AG04450 (cell line): ENCODE measurements at regions of chr4 and their contacts with region 1.

Region 1: GRCh38 chr4:39469429-39470077 is 10.7 kb downstream of the LIAS start:
- DNase-seq: peak; percentile 55
- H3K4me3 ChIP-seq: no peak overlapping the region
- H3K27ac ChIP-seq: no peak overlapping the region
- H3K27me3 ChIP-seq: no peaks in the 10 kb centered on the region
- CTCF ChIP-seq: peak; percentile 87

Region 2: GRCh38 chr4:39480251-39480650 is 10.7 kb after region 1 on chr4:
- CTCF ChIA-PET with region 1: interaction called, 15 read pairs
- POLR2A ChIA-PET with region 1: no interaction called
- DNase-seq: no peak
- H3K4me3 ChIP-seq: no peak overlapping the region
- H3K27ac ChIP-seq: no peak overlapping the region
- H3K27me3 ChIP-seq: no peaks in the 10 kb centered on the region
- CTCF ChIP-seq: no peak

Region 3: GRCh38 chr4:39597695-39598381 is 128.3 kb after region 1 on chr4:
- CTCF ChIA-PET with region 1: interaction called, 10 read pairs
- POLR2A ChIA-PET with region 1: no interaction called
- DNase-seq: no peak
- H3K4me3 ChIP-seq: no peak overlapping the region
- H3K27ac ChIP-seq: no peak overlapping the region
- H3K27me3 ChIP-seq: no peaks in the 10 kb centered on the region
- CTCF ChIP-seq: no peak

Region 4: DNA sequence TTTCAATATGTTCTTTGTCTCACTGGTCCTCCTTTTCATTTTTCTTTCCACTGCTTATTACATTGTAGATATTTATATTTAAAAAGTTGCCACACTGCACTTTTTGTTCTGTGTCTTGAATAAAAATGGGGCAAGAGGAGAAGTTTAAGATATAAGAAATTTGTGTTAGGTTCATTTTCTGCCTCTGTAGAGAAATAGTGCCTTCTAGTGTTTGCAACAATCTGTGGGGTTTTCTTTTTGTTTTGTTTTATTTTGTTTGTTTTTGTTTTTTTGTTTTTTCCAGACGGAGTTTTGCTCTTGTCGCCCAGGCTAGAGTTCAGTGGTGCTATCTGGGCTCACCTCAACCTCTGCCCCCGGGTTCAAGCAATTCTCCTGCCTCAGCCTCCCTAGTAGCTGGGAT is 189.2 kb after region 1 on chr4:
- CTCF ChIA-PET with region 1: interaction called, 11 read pairs
- POLR2A ChIA-PET with region 1: no interaction called
- DNase-seq: no peak
- H3K4me3 ChIP-seq: no peak overlapping the region
- H3K27ac ChIP-seq: no peak overlapping the region
- H3K27me3 ChIP-seq: no peaks in the 10 kb centered on the region
- CTCF ChIP-seq: peak; percentile 40